CD4-positive, alpha-beta T cell (primary cell): ENCODE measurements at regions of chr9 and their contacts with region 1.

Region 1: GRCh38 chr9:35732122-35732799 is at the starts of genes CREB3 and TLN1:
- DNase-seq: peak; percentile 90 to 99 (median 96)
- ATAC-seq: peak; percentile 91
- H3K4me3 ChIP-seq: peak within 1 kb of the TSS; percentile 91
- H3K4me3 Mint-ChIP-seq: peak within 1 kb of the TSS; percentile 90
- H3K27ac ChIP-seq: peak within 1 kb of the TSS; percentile 89 to 95
- H3K27ac Mint-ChIP-seq: no peak within 1 kb of the TSS
- H3K4me1 ChIP-seq: peaks cover 71% of the 10 kb centered on the region
- H3K4me1 Mint-ChIP-seq: peaks cover 22% of the 10 kb centered on the region
- H3K27me3 ChIP-seq: no peaks in the 10 kb centered on the region
- H3K27me3 Mint-ChIP-seq: no peaks in the 10 kb centered on the region
- CTCF ChIP-seq: no peak
- total RNA-seq, gene CREB3: 13.7 to 15.4 TPM
- total RNA-seq, gene TLN1: 149 to 151 TPM

Region 2: GRCh38 chr9:34989003-34989945 is 743.0 kb before region 1 on chr9 and contains the start of gene DNAJB5:
- CTCF ChIA-PET with region 1: no interaction called
- POLR2A ChIA-PET with region 1: no interaction called
- intact Hi-C with region 1: loop called in 1 of 2 experiments (anchors 10 kb)
- DNase-seq: peak; percentile 93 to 99 (median 95)
- ATAC-seq: peak; percentile 90
- H3K4me3 ChIP-seq: peak within 1 kb of the TSS; percentile 78
- H3K4me3 Mint-ChIP-seq: peak within 1 kb of the TSS; percentile 94
- H3K27ac ChIP-seq: peak within 1 kb of the TSS; percentile 62 to 63
- H3K27ac Mint-ChIP-seq: peak within 1 kb of the TSS; percentile 84
- H3K4me1 ChIP-seq: peaks cover 51% of the 10 kb centered on the region
- H3K4me1 Mint-ChIP-seq: peaks cover 51% of the 10 kb centered on the region
- H3K27me3 ChIP-seq: no peaks in the 10 kb centered on the region
- H3K27me3 Mint-ChIP-seq: no peaks in the 10 kb centered on the region
- CTCF ChIP-seq: no peak
- total RNA-seq, gene DNAJB5: 2.7 to 2.8 TPM

Region 3: DNA sequence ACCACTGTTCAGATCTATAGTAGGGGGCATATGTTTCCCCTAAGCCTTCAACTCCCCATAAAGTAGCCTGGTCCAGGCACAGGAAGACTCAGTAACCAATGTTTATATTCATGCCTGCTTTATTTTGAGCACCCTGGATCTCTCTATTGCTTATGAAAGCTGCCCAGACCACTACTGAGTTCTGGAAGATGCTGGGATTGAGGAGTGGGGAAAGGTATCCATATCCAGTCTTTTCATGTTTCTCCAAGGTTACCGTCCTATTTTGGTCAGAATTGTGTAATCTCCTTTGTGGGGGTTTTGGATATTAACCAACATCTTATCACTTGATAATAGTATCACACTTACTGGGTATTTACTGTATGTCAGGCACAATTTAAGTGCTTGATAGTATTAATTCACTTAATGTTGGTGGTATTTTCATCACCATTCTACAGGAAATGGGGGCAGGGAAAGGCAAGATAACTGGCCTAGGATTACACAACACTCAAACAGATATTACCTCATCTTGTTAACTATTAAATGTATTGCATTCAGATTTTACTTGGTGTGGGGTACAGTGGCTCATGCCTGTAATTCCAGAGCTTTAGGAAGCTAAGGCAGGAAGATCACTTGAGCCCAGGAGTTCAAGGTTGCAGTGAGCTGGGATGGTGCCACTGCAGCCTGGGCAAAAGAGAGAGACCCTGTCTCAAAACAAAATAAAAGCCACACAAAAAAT is 206.0 kb before region 1 on chr9:
- CTCF ChIA-PET with region 1: no interaction called
- POLR2A ChIA-PET with region 1: no interaction called
- intact Hi-C with region 1: no loop called
- DNase-seq: no peak
- ATAC-seq: no peak
- H3K4me3 ChIP-seq: no peak overlapping the region
- H3K4me3 Mint-ChIP-seq: no peak overlapping the region
- H3K27ac ChIP-seq: no peak overlapping the region
- H3K27ac Mint-ChIP-seq: no peak overlapping the region
- H3K4me1 ChIP-seq: no peaks in the 10 kb centered on the region
- H3K4me1 Mint-ChIP-seq: peaks cover 4% of the 10 kb centered on the region
- H3K27me3 ChIP-seq: no peaks in the 10 kb centered on the region
- H3K27me3 Mint-ChIP-seq: no peaks in the 10 kb centered on the region
- CTCF ChIP-seq: no peak

Region 4: GRCh38 chr9:35603987-35604577 is 128.2 kb before region 1 on chr9:
- CTCF ChIA-PET with region 1: interaction called, 17 read pairs
- POLR2A ChIA-PET with region 1: interaction called, 26 read pairs
- intact Hi-C with region 1: loop called (anchors 1 kb)
- DNase-seq: peak; percentile 98 to 100 (median 99)
- ATAC-seq: peak; percentile 88
- H3K4me3 ChIP-seq: peak overlapping the region; percentile 94
- H3K4me3 Mint-ChIP-seq: peak overlapping the region; percentile 99
- H3K27ac ChIP-seq: peak overlapping the region; percentile 73 to 89
- H3K27ac Mint-ChIP-seq: peak overlapping the region; percentile 96
- H3K4me1 ChIP-seq: peaks cover 43% of the 10 kb centered on the region
- H3K4me1 Mint-ChIP-seq: peaks cover 33% of the 10 kb centered on the region
- H3K27me3 ChIP-seq: no peaks in the 10 kb centered on the region
- H3K27me3 Mint-ChIP-seq: no peaks in the 10 kb centered on the region
- CTCF ChIP-seq: peak; percentile 98

Region 5: DNA sequence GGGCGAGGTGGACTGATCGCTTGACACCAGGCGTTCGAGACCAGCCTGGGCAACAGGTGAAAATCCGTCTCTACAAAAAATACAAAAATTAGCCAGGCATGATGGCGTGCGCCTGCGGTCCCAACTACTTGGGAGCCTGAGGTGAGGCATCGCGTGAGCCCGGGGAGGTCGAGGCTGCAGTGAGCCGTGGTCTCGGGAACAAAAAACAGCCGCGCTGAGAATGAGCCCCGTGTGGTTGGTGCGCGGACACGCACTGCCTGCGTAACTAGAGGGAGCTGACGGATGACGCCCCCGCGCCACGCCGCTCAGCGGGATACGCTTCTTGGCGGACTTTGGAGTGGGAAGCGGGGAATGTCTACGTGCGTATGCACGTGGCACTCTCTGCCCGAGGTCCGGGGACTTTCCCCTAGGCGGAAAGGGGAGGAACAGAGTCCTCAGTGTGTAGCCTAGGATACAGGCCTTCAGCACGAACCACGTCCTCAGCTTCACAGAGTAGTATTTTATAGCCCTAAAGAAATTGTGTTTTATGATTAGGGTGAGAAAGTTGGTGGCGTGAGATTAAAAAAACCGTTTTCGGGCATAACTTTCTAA is 74.6 kb before region 1 on chr9 and contains the start of gene RMRP:
- CTCF ChIA-PET with region 1: interaction called, 21 read pairs
- POLR2A ChIA-PET with region 1: interaction called, 61 read pairs
- intact Hi-C with region 1: loop called in 1 of 2 experiments (anchors 2 kb)
- DNase-seq: peak; percentile 63 to 97 (median 77)
- ATAC-seq: peak; percentile 75
- H3K4me3 ChIP-seq: peak within 1 kb of the TSS; percentile 88
- H3K4me3 Mint-ChIP-seq: peak within 1 kb of the TSS; percentile 96
- H3K27ac ChIP-seq: peak within 1 kb of the TSS; percentile 99 to 100
- H3K27ac Mint-ChIP-seq: peak within 1 kb of the TSS; percentile 100
- H3K4me1 ChIP-seq: peaks cover 73% of the 10 kb centered on the region
- H3K4me1 Mint-ChIP-seq: peaks cover 69% of the 10 kb centered on the region
- H3K27me3 ChIP-seq: no peaks in the 10 kb centered on the region
- H3K27me3 Mint-ChIP-seq: peaks cover 8% of the 10 kb centered on the region
- CTCF ChIP-seq: no peak
- total RNA-seq, gene RMRP: 14,857 to 24,615 TPM

Region 6: GRCh38 chr9:35748858-35749514 is 16.7 kb after region 1 on chr9 and contains the starts of genes GBA2 and RGP1:
- CTCF ChIA-PET with region 1: interaction called, 32 read pairs
- POLR2A ChIA-PET with region 1: interaction called, 73 read pairs
- intact Hi-C with region 1: loop called (anchors 1 kb)
- DNase-seq: peak; percentile 25 to 77 (median 58)
- ATAC-seq: peak; percentile 59
- H3K4me3 ChIP-seq: peak within 1 kb of the TSS; percentile 98
- H3K4me3 Mint-ChIP-seq: peak within 1 kb of the TSS; percentile 99
- H3K27ac ChIP-seq: peak within 1 kb of the TSS; percentile 65 to 85
- H3K27ac Mint-ChIP-seq: peak within 1 kb of the TSS; percentile 88
- H3K4me1 ChIP-seq: peaks cover 48% of the 10 kb centered on the region
- H3K4me1 Mint-ChIP-seq: peaks cover 51% of the 10 kb centered on the region
- H3K27me3 ChIP-seq: no peaks in the 10 kb centered on the region
- H3K27me3 Mint-ChIP-seq: no peaks in the 10 kb centered on the region
- CTCF ChIP-seq: no peak
- total RNA-seq, gene GBA2: 17.3 to 18.6 TPM
- total RNA-seq, gene RGP1: 12.6 to 13.1 TPM

Region 7: DNA sequence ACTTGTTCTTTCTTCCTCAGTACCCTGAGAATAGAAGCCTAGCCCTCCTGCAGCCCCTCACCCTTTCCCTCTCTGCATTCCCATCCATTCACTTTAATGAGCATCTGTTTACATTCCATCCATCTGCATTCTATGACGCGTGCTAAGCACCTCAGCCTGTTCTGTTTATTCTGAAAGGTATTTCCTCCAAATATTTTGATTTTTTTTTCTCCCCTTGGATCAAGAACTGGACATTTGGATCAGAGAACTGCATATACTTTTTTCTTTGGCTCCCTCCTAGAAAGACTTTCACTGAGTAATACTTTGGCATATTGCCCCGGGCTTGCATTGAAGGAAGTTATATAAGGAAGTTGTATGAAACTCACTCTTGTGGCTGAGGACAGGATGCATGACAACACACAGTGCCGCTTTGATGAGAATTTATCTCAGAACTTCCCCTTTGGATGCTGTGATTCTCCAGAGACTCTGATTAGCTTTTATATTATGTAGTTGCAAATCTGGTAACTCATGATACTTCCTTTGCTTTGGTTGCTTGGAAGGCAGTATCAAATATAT is 112.5 kb after region 1 on chr9:
- CTCF ChIA-PET with region 1: no interaction called
- POLR2A ChIA-PET with region 1: interaction called, 11 read pairs
- intact Hi-C with region 1: no loop called
- DNase-seq: peak in 8 of 14 experiments; percentile 17 to 80 (median 56)
- ATAC-seq: peak; percentile 99
- H3K4me3 ChIP-seq: no peak overlapping the region
- H3K4me3 Mint-ChIP-seq: no peak overlapping the region
- H3K27ac ChIP-seq: peak overlapping the region; percentile 25 to 56
- H3K27ac Mint-ChIP-seq: peak overlapping the region; percentile 25
- H3K4me1 ChIP-seq: peaks cover 26% of the 10 kb centered on the region
- H3K4me1 Mint-ChIP-seq: peaks cover 22% of the 10 kb centered on the region
- H3K27me3 ChIP-seq: no peaks in the 10 kb centered on the region
- H3K27me3 Mint-ChIP-seq: no peaks in the 10 kb centered on the region
- CTCF ChIP-seq: no peak